ENCODE measurements at regions of chr11 and their contacts with region 1.

Region 1: DNA sequence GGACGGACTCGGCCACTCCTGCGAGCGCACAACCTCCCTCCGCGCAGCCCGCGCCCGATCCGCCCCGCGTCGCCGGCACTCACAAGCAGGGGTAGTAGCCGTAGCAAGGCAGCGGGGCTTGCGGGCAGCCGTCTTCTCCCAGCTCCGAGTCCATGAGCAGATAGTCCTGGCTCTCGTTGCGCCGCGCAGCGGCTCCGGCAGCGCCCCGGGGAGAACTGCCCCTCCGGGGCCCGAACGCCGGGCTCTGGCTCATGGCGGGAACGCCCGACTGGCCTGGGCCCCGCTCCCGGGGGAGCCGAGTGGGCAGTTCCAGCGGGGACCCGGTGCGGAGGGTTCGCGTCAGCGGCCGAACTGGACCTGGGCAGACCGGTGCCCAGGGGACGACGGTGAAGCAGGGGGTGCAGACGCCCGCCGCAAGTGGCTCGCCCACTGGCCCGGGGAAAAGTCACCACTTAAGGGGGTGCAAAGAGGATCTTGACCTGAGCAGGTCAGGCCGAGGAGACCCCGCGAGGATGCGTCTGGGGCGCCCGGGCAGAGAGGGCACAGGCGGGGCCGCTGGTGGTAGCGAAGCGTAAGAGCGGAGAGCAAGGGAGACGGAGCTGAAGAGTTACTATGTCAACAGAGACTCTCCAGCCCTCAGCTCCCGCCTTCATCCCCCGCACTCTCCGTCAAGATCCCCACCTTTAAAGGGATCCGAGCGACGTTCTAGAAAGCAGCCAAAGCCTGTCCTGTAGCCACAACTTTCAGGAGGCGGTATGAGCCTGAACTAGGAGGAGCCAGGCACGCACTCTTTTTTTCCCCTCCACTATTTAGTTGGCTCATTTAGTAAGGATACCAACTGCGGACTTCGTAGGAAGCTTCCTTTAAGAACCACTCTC is at the start of gene TRPC6:
- DNase-seq: no peak
- H3K4me3 ChIP-seq: peak within 1 kb of the TSS; percentile 74 to 79 (median 76)
- H3K27ac ChIP-seq: peak within 1 kb of the TSS; percentile 89 to 96 (median 92)
- H3K4me1 ChIP-seq: peaks cover 3 to 14% (median 10%) of the 10 kb centered on the region in 4 donors
- H3K27me3 ChIP-seq: peaks cover 0 to 14% (median 0%) of the 10 kb centered on the region in 4 donors
- CTCF ChIP-seq: no peak
- EP300 ChIP-seq: no peak
- POLR2A ChIP-seq: no peak
- total RNA-seq, gene TRPC6: 55.5 to 77.3 (median 65.8) TPM

Region 2: GRCh38 chr11:101444164-101444563 is 139.3 kb before region 1 on chr11:
- intact Hi-C with region 1: loop called (anchors 5 kb)
- DNase-seq: no peak
- H3K4me3 ChIP-seq: no peak overlapping the region
- H3K27ac ChIP-seq: no peak overlapping the region
- H3K4me1 ChIP-seq: peaks cover 12 to 49% (median 35%) of the 10 kb centered on the region in 4 donors
- H3K27me3 ChIP-seq: no peaks in the 10 kb centered on the region
- CTCF ChIP-seq: no peak
- EP300 ChIP-seq: no peak
- POLR2A ChIP-seq: no peak

Region 3: DNA sequence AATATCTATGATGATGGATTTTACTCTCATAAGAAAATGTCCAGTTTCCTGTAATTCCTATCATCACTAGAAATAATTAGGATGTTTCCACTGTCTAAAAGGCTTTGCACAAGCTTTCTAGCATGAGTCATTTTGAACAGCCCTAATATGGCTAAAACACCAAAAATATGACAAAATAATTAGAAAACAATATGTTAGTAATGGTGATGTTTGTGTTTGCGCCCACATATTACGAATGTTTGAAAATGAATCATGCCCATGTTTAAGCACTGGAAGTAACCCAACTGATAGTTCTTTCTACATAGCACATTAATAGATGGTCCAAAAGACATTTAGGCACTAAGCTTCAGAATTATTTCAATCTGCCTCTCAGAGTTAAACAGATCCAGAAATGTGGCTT is 95.7 kb before region 1 on chr11:
- intact Hi-C with region 1: loop called (anchors 10 kb)
- DNase-seq: no peak
- H3K4me3 ChIP-seq: no peak overlapping the region
- H3K27ac ChIP-seq: peak overlapping the region in 2 of 4 donors; percentile 20 to 42
- H3K4me1 ChIP-seq: peaks cover 0 to 4% (median 2%) of the 10 kb centered on the region in 4 donors
- H3K27me3 ChIP-seq: no peaks in the 10 kb centered on the region
- CTCF ChIP-seq: no peak
- EP300 ChIP-seq: no peak
- POLR2A ChIP-seq: no peak